ENCODE measurements at regions of chr12 and their contacts with region 1.

Region 1: GRCh38 chr12:67433385-67434175 is 164.4 kb downstream of the CAND1 start:
- DNase-seq: no peak

Region 2: DNA sequence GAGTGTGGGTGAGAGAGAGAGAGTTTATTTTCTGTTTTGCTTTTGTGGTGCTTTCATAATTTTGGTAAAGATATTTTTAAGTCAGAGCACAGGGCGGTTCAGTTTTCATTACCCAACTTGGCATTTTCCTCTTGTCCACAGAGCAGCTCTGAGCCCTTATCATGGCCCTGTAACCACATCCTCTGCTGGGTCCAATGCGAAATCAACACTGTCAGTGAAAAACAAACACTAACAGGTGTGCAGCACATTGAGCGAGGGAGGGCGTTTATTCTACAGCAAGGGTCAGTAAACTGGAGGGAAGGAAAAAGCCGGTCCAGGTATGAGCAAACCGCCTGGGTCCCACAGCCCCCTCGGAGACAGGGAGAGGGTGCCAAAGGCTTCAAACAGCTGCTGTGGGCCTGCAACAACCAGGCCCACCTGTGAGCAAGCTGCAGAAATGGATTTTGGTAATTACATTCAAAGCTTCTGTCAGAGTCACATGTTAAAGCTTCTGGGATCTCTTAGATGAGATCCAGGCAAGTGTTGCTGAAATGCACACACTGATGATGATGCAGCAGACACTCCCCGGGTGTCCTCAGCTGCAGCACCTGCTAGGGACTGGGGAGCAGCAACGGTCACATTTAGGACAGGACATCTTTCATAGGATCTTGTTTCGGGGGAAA is 82.2 kb after region 1 on chr12:
- intact Hi-C with region 1: loop called (anchors 5 kb)
- DNase-seq: no peak

Region 3: GRCh38 chr12:67943226-67943892 is 509.8 kb after region 1 on chr12:
- intact Hi-C with region 1: loop called (anchors 5 kb)
- DNase-seq: no peak

Measured in cardiac septum (tissue), 1 donor.